MCF 10A (cell line): ENCODE measurements at regions of chr11 and their contacts with region 1.

Region 1: DNA sequence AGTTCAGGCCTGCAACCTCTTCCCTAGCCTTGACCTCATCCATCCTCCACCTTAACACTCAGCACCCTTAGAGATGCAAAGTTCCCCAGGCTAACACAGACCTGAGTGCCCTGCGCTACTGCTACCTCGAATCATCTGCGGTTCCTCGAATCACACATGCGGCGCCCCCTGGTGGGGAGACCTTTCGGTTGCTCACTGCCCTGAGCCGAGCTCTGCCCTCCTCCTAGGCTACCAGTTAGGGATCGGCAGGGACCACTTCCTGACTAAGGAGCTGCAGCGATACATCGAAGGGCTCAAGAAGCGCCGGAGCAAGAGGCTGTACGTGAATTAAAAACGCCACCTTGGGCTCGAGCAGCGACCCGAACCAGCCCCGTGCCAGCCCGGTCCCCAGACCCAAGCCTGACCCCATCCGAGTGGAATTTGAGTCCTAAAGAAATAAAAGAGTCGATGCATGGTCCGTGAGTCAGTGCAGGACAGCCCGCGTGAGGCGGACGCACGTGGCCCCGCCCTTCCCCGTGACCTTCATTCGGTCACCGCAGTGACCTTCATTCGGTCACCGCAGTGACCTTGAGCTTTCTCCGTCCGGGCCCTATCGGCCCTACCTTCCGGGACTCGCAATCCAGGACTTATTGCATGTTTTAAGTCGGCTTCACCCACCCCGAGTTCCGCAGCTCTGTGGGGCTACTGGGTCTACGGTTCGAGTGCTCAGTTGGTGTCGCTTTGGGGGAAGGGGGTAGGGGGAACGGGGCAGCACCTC is 830 bp upstream of the ESRRA start:
- DNase-seq: peak; percentile 92
- H3K4me3 Mint-ChIP-seq: peak overlapping the region; percentile 99
- H3K27ac Mint-ChIP-seq: peak overlapping the region; percentile 83
- H3K4me1 Mint-ChIP-seq: peaks cover 18% of the 10 kb centered on the region
- H3K27me3 Mint-ChIP-seq: no peaks in the 10 kb centered on the region
- CTCF ChIP-seq: peak; percentile 78

Region 2: DNA sequence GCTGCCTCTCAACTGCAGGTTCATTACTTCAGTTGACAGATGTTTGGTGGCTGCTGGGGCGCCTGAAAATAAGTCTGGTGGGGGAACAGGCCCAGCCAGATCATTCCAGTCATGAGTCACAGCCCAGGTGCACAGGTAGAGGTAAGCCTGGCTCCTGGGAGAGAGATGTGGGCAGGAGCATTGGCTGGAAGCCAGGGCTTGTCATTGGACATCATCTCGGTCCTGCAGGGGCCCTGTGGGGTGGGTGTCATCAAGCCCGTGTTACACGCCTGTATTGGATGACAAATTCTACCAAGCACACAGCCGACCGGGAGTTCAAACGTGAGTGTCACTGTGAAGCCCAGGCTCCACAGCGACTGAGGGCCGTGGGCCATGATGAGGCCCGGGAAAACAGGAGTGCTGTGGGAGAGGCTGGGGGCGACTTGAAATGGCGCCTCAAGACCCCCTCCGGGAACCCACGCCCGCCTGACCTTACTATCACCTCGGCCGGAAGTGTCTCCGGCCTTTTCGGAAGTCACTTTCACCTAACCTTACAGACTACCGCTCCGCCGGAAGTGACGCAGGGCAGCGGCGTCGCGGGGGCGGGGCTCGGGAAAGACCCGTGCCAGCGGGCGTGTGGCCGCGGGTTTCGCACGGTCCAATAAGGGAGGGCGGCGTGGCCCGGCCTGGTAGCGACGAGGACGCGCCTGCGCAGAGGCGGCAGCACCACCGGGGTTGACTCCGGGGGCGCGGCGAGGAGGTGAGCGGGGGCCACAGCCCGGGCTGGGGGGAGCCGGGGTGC is 63.9 kb before region 1 on chr11 and contains the start of gene FKBP2:
- CTCF ChIA-PET with region 1: interaction called, 27 read pairs
- POLR2A ChIA-PET with region 1: interaction called, 107 read pairs
- intact Hi-C with region 1: no loop called
- DNase-seq: peak; percentile 96
- H3K4me3 Mint-ChIP-seq: peak within 1 kb of the TSS; percentile 93
- H3K27ac Mint-ChIP-seq: peak within 1 kb of the TSS; percentile 98
- H3K4me1 Mint-ChIP-seq: peaks cover 19% of the 10 kb centered on the region
- H3K27me3 Mint-ChIP-seq: no peaks in the 10 kb centered on the region
- CTCF ChIP-seq: no peak
- total RNA-seq, gene FKBP2: 84.7 and 86.0 TPM in 2 replicates

Region 3: GRCh38 chr11:64263021-64263946 is 41.2 kb before region 1 on chr11:
- CTCF ChIA-PET with region 1: interaction called, 70 read pairs
- POLR2A ChIA-PET with region 1: interaction called, 92 read pairs
- intact Hi-C with region 1: no loop called
- DNase-seq: peak; percentile 42
- H3K4me3 Mint-ChIP-seq: no peak overlapping the region
- H3K27ac Mint-ChIP-seq: no peak overlapping the region
- H3K4me1 Mint-ChIP-seq: peaks cover 13% of the 10 kb centered on the region
- H3K27me3 Mint-ChIP-seq: no peaks in the 10 kb centered on the region
- CTCF ChIP-seq: no peak

Region 4: GRCh38 chr11:64284048-64284961 is 20.2 kb before region 1 on chr11 and contains the start of gene BAD:
- CTCF ChIA-PET with region 1: interaction called, 96 read pairs
- POLR2A ChIA-PET with region 1: interaction called, 26 read pairs
- intact Hi-C with region 1: loop called (anchors 2 kb)
- DNase-seq: peak; percentile 94
- H3K4me3 Mint-ChIP-seq: peak within 1 kb of the TSS; percentile 76
- H3K27ac Mint-ChIP-seq: peak within 1 kb of the TSS; percentile 84
- H3K4me1 Mint-ChIP-seq: peaks cover 10% of the 10 kb centered on the region
- H3K27me3 Mint-ChIP-seq: no peaks in the 10 kb centered on the region
- CTCF ChIP-seq: no peak
- total RNA-seq, gene BAD: 67.4 and 79.7 TPM in 2 replicates

Region 5: GRCh38 chr11:64324692-64325469 is 20.4 kb after region 1 on chr11:
- CTCF ChIA-PET with region 1: interaction called, 5 read pairs
- POLR2A ChIA-PET with region 1: interaction called, 13 read pairs
- intact Hi-C with region 1: no loop called
- DNase-seq: peak; percentile 90
- H3K4me3 Mint-ChIP-seq: peak overlapping the region; percentile 7
- H3K27ac Mint-ChIP-seq: peak overlapping the region; percentile 94
- H3K4me1 Mint-ChIP-seq: peaks cover 28% of the 10 kb centered on the region
- H3K27me3 Mint-ChIP-seq: no peaks in the 10 kb centered on the region
- CTCF ChIP-seq: no peak

Region 6: DNA sequence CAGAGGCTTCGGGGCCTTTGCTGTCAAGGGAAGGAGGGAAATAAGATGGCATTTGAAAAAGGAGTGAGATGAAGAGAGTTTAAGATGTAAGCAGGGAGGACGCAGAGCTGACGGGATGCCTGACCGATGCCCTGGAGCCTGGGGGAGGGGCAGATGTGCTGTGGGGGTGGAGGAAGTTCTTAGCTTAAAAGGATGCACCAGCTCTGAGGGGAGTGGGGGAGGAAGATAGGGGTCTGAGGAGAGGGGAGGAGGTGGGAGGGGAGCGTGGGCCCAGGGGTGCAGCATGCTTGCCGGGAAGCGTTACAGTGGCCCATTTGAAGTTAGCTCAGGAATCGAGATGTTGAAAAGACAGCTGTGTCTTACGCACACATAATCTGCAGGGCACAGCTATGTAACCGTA is 110.8 kb after region 1 on chr11:
- CTCF ChIA-PET with region 1: no interaction called
- POLR2A ChIA-PET with region 1: no interaction called
- intact Hi-C with region 1: no loop called
- DNase-seq: no peak
- H3K4me3 Mint-ChIP-seq: no peak overlapping the region
- H3K27ac Mint-ChIP-seq: no peak overlapping the region
- H3K4me1 Mint-ChIP-seq: no peaks in the 10 kb centered on the region
- H3K27me3 Mint-ChIP-seq: peaks cover 27% of the 10 kb centered on the region
- CTCF ChIP-seq: no peak